ENCODE measurements at regions of chr9 and their contacts with region 1.

Region 1: GRCh38 chr9:89278997-89279739 is 31.8 kb upstream of the CKS2 start:
- DNase-seq: no peak

Region 2: DNA sequence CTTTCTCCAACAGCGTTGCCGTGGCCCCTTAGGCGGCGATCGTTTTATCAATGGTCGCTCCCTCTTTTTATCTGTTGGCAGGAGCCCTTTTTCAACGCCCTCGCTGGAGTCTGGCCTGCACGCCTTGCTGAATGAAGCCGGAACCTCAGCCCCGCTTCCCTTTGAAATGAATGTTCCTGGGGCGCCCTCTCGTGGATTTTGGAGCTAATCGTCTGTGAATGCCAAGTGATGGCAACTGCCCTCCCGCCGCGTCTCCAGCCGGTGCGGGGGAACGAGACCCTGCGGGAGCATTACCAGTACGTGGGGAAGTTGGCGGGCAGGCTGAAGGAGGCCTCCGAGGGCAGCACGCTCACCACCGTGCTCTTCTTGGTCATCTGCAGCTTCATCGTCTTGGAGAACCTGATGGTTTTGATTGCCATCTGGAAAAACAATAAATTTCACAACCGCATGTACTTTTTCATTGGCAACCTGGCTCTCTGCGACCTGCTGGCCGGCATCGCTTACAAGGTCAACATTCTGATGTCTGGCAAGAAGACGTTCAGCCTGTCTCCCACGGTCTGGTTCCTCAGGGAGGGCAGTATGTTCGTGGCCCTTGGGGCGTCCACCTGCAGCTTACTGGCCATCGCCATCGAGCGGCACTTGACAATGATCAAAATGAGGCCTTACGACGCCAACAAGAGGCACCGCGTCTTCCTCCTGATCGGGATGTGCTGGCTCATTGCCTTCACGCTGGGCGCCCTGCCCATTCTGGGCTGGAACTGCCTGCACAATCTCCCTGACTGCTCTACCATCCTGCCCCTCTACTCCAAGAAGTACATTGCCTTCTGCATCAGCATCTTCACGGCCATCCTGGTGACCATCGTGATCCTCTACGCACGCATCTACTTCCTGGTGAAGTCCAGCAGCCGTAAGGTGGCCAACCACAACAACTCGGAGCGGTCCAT is 277.9 kb before region 1 on chr9:
- intact Hi-C with region 1: loop called (anchors 10 kb)
- DNase-seq: peak; percentile 79 to 98 (median 90)

Region 3: GRCh38 chr9:89179895-89180667 is 99.1 kb before region 1 on chr9:
- intact Hi-C with region 1: loop called (anchors 10 kb)
- DNase-seq: peak; percentile 84 to 99 (median 93)

Measured in posterior cingulate gyrus (tissue), 11 donors.